ENCODE measurements at regions of chr2 and their contacts with region 1.

Region 1: GRCh38 chr2:9102855-9103831 is 99.7 kb upstream of the MBOAT2 start:
- DNase-seq: no peak
- ATAC-seq: peak in 1 of 4 donors; percentile 14
- H3K4me3 ChIP-seq: no peak overlapping the region
- H3K27ac ChIP-seq: no peak overlapping the region
- H3K4me1 ChIP-seq: peaks cover 0 to 21% (median 6%) of the 10 kb centered on the region in 12 donors
- H3K27me3 ChIP-seq: no peaks in the 10 kb centered on the region
- CTCF ChIP-seq: no peak
- POLR2A ChIP-seq: no peak

Region 2: GRCh38 chr2:8729939-8730338 is 373.2 kb before region 1 on chr2:
- intact Hi-C with region 1: no loop called
- DNase-seq: peak in 4 of 5 donors; percentile 54 to 80 (median 66)
- ATAC-seq: peak; percentile 96 to 99 (median 98)
- H3K4me3 ChIP-seq: no peak overlapping the region
- H3K27ac ChIP-seq: peak overlapping the region in 3 of 12 donors; percentile 1 to 46 (median 28)
- H3K4me1 ChIP-seq: peaks cover 0 to 12% (median 0%) of the 10 kb centered on the region in 12 donors
- H3K27me3 ChIP-seq: no peaks in the 10 kb centered on the region
- CTCF ChIP-seq: no peak
- POLR2A ChIP-seq: no peak

Region 3: GRCh38 chr2:8872821-8873432 is 230.2 kb before region 1 on chr2:
- intact Hi-C with region 1: loop called in 1 of 10 experiments (anchors 10 kb)
- DNase-seq: no peak
- ATAC-seq: no peak
- H3K4me3 ChIP-seq: no peak overlapping the region
- H3K27ac ChIP-seq: no peak overlapping the region
- H3K4me1 ChIP-seq: no peaks in the 10 kb centered on the region
- H3K27me3 ChIP-seq: no peaks in the 10 kb centered on the region
- CTCF ChIP-seq: peak in 11 of 12 donors; percentile 30 to 66 (median 49)
- POLR2A ChIP-seq: no peak

Region 4: DNA sequence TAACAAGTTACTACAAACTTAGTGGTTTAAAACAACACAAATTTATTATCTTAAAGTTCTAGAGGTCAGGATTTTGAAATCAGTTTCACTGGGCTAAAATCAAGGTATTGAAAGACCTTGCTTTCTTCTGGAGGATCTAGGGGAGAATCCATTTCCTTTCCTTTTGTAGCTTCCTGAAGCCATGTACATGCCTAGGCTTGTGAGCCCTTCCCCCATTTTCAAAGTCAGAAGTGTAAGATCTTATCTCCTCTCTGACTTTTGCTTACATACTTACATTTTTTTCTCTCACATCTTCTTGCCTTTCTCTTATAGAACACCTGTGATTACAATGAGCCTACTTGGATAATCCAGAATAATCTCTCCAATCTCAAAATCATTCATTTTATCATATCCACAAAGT is 21.0 kb before region 1 on chr2:
- intact Hi-C with region 1: loop called in 1 of 10 experiments (anchors 1 kb)
- DNase-seq: no peak
- ATAC-seq: no peak
- H3K4me3 ChIP-seq: no peak overlapping the region
- H3K27ac ChIP-seq: no peak overlapping the region
- H3K4me1 ChIP-seq: peaks cover 0 to 5% (median 1%) of the 10 kb centered on the region in 12 donors
- H3K27me3 ChIP-seq: no peaks in the 10 kb centered on the region
- CTCF ChIP-seq: no peak
- POLR2A ChIP-seq: no peak

Measured in heart left ventricle (tissue), 16 donors.